Adrenal gland (tissue), 19 donors: ENCODE measurements at regions of chr13 and their contacts with region 1.

Region 1: DNA sequence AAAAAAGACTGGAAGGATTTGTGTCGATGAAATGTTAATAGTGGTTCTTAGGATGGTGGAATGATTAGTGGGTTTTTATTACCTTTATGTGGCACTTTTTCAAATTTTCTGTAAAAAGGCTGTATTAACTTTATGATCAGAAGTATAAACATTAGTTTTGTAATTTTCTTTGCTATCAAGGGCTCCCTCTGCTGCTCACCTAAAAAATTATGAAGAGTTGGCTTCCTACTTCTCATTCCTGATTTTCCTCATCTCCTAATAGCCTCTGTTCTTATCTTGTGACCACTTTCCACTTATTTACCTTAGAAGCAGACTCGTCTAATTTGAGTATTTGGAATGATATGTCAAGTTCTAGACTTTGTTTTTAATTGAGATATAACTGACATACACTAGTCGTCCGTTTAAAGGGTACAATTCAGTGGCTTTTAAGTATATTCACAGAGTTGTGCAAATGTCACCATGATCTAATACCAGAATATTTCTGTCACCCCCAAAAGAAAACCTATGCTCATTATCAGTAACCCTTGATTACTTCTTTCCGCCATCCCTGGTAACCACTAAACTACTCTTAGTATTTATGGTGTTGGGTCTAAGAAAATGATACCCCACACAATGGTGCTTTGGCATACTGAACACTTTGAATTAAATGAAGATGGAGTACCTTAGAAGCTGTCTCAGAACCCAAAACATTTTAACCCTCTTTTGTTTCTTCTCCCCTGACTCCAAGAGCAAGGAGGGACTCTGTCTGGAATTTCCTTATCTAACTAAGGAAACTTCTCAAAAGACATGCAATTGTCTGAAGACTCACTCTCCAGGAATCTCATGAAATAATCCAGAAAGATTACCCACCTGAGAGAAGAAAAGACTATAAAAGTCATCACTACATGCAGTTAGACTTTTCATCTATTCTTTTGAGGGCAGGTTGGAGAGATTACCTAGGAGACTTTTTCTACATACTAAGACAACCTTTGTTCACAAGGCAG is 311.3 kb downstream of the DLEU7 start:
- DNase-seq: peak in 1 of 7 donors; percentile 22
- H3K4me3 ChIP-seq: no peak overlapping the region
- H3K27ac ChIP-seq: no peak overlapping the region
- H3K4me1 ChIP-seq: peaks cover 0 to 21% of the 10 kb centered on the region in 2 donors
- H3K27me3 ChIP-seq: no peaks in the 10 kb centered on the region
- CTCF ChIP-seq: peak; percentile 34 to 72 (median 64)
- POLR2A ChIP-seq: no peak

Region 2: GRCh38 chr13:50071379-50071778 is 460.8 kb before region 1 on chr13:
- intact Hi-C with region 1: no loop called
- DNase-seq: no peak
- H3K4me3 ChIP-seq: peak overlapping the region in 1 of 4 donors; percentile 13
- H3K27ac ChIP-seq: peak overlapping the region in 2 of 5 donors; percentile 5 to 9
- H3K4me1 ChIP-seq: peaks cover 4 to 83% of the 10 kb centered on the region in 2 donors
- H3K27me3 ChIP-seq: no peaks in the 10 kb centered on the region
- CTCF ChIP-seq: no peak
- POLR2A ChIP-seq: no peak

Region 3: DNA sequence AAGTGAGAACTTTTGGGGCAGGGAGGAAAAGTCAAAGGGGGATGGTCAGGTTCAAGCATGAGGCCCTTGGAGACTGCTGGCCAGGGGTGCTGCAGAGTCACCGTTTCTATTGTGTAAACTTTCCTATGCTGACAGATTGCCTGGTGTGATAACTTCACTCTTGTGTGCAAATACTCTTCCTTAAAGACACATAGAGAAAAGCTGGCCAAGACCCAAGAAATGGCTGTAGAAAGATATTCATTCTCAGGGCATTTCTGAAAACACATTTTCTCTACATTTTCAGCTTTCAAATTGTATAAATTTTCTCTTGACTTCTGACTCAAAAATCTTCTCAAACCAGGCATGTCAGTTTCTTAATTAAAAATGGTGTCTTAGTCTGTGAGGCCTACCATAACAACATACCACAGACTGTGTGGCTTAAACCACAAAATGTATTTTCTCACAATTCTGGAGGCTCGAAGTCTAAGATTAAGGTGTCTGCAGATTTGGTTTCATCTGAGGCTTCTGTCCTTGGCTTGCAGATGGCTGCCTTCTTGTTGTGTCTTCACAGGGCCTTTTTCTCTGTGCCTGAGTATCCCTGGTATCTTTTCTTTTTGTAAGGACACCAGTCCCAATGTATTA is 212.5 kb before region 1 on chr13:
- intact Hi-C with region 1: no loop called
- DNase-seq: no peak
- H3K4me3 ChIP-seq: no peak overlapping the region
- H3K27ac ChIP-seq: peak overlapping the region in 1 of 5 donors; percentile 36
- H3K4me1 ChIP-seq: no peaks in the 10 kb centered on the region
- H3K27me3 ChIP-seq: no peaks in the 10 kb centered on the region
- CTCF ChIP-seq: no peak
- POLR2A ChIP-seq: no peak

Region 4: DNA sequence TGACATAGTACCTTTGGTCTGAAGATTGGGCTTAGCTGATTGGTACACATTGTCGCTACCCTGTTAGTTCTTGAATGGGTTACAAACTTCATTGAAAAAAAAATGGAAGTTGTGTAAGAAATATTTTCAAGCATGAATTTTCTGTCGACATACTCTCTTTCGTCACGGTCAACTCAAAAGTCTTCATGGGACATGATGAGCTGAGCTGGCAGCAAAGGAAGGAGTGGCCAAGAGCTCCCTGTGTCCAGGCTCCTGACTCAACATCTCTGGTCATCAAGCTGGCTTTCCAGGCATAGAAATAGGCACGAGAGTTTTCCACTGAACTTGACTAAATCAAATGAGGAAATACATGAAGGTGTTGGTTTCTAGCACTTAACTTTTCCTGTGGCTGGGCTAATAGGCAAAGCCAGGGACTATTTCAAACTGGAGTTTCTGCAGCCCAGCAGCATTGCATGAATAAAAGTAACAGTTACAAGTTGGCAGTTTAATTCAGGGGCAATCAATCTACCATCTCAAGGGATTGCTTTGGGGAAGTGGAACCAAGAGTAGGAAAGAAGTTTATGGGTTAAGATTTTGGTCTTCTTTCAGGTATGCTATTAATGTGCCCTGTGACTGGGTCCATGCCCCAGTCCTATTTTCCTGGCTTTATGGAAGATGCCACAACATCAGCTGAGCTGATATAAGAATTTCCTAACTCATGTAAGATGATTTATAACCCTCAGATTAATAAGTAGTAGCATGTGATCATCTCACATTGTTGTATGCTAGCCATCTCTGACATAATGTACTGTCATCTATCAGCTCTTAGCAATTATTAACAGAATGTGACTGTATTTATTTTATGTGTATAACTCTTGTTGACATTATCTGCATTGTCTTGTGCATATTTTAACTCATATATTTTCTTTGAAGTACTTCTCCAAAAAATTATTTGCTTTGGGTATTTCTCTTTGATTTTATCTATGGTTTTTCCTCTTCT is 74.5 kb before region 1 on chr13:
- intact Hi-C with region 1: no loop called
- DNase-seq: peak in 3 of 7 donors; percentile 15 to 43 (median 27)
- H3K4me3 ChIP-seq: no peak overlapping the region
- H3K27ac ChIP-seq: no peak overlapping the region
- H3K4me1 ChIP-seq: no peaks in the 10 kb centered on the region
- H3K27me3 ChIP-seq: no peaks in the 10 kb centered on the region
- CTCF ChIP-seq: no peak
- POLR2A ChIP-seq: no peak

Region 5: GRCh38 chr13:50650592-50651301 is 118.5 kb after region 1 on chr13:
- intact Hi-C with region 1: no loop called
- DNase-seq: no peak
- H3K4me3 ChIP-seq: no peak overlapping the region
- H3K27ac ChIP-seq: no peak overlapping the region
- H3K4me1 ChIP-seq: no peaks in the 10 kb centered on the region
- H3K27me3 ChIP-seq: no peaks in the 10 kb centered on the region
- CTCF ChIP-seq: no peak
- POLR2A ChIP-seq: no peak

Region 6: DNA sequence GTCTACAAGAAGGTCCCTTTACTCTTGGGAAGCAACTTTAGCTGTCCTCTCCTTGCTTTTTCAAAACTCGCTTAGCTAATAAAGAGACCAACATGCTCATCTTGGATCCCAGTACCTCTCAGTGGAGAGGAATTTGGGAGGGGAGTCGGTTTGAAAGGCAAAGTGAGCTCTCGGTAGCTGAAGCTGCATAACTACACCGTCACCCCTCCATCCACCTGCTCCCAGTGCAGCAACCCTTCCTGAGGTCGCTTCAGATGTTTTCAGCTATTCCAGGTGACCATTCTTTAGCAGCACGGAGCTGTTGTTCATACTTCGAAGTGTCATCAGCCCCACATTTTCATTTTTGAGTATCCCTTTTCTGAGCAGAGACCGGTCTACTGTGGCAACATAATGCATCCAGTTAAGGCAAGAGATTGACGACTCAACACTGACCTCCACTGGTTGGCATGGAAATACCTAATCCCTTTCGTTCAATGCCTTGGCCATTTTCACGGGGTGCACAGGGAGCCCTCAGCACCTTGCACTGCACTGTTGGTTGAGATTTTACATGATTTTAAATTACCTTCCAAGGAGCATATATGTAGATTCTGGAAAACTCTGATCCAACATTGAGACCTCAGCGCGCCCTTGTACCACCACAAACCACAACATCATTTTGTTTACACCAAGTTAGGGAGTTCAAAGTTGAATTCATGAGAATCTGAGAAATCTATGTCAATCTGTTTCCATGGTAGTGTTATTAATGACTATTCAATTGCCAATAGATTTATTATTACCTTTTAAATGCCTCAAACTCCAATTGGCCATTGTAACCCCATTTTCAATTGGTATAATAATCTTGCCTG is 269.1 kb after region 1 on chr13:
- intact Hi-C with region 1: loop called in 1 of 2 experiments (anchors 10 kb)
- DNase-seq: peak; percentile 48 to 82 (median 67)
- H3K4me3 ChIP-seq: no peak overlapping the region
- H3K27ac ChIP-seq: no peak overlapping the region
- H3K4me1 ChIP-seq: no peaks in the 10 kb centered on the region
- H3K27me3 ChIP-seq: no peaks in the 10 kb centered on the region
- CTCF ChIP-seq: peak; percentile 59 to 87 (median 78)
- POLR2A ChIP-seq: no peak